ENCODE measurements at regions of chr17 and their contacts with region 1.

Region 1: GRCh38 chr17:78865682-78866390 is 25.2 kb upstream of the USP36 start:
- DNase-seq: peak; percentile 96
- ATAC-seq: peak; percentile 43
- H3K4me3 ChIP-seq: peak overlapping the region; percentile 51
- H3K27ac ChIP-seq: no peak overlapping the region
- H3K4me1 ChIP-seq: peaks cover 26% of the 10 kb centered on the region
- H3K27me3 ChIP-seq: no peaks in the 10 kb centered on the region
- CTCF ChIP-seq: peak; percentile 94

Region 2: GRCh38 chr17:78729641-78730040 is 136.2 kb before region 1 on chr17:
- CTCF ChIA-PET with region 1: interaction called, 10 read pairs
- POLR2A ChIA-PET with region 1: no interaction called
- intact Hi-C with region 1: no loop called
- DNase-seq: no peak
- ATAC-seq: no peak
- H3K4me3 ChIP-seq: no peak overlapping the region
- H3K27ac ChIP-seq: no peak overlapping the region
- H3K4me1 ChIP-seq: peaks cover under 1% of the 10 kb centered on the region
- H3K27me3 ChIP-seq: no peaks in the 10 kb centered on the region
- CTCF ChIP-seq: no peak

Region 3: GRCh38 chr17:78840725-78841611 is 24.9 kb before region 1 on chr17 and contains the start of gene USP36:
- CTCF ChIA-PET with region 1: no interaction called
- POLR2A ChIA-PET with region 1: no interaction called
- intact Hi-C with region 1: loop called (anchors 2 kb)
- DNase-seq: peak; percentile 100
- ATAC-seq: peak; percentile 82
- H3K4me3 ChIP-seq: peak within 1 kb of the TSS; percentile 77
- H3K27ac ChIP-seq: peak within 1 kb of the TSS; percentile 84
- H3K4me1 ChIP-seq: peaks cover 39% of the 10 kb centered on the region
- H3K27me3 ChIP-seq: no peaks in the 10 kb centered on the region
- CTCF ChIP-seq: no peak
- total RNA-seq, gene USP36: 37.5 and 41.8 TPM in 2 replicates

Region 4: GRCh38 chr17:78883164-78884122 is 17.6 kb after region 1 on chr17:
- CTCF ChIA-PET with region 1: interaction called, 4 read pairs
- POLR2A ChIA-PET with region 1: no interaction called
- intact Hi-C with region 1: loop called (anchors 1 kb)
- DNase-seq: peak; percentile 95
- ATAC-seq: peak; percentile 81
- H3K4me3 ChIP-seq: peak overlapping the region; percentile 47
- H3K27ac ChIP-seq: peak overlapping the region; percentile 84
- H3K4me1 ChIP-seq: peaks cover 42% of the 10 kb centered on the region
- H3K27me3 ChIP-seq: no peaks in the 10 kb centered on the region
- CTCF ChIP-seq: no peak

Region 5: DNA sequence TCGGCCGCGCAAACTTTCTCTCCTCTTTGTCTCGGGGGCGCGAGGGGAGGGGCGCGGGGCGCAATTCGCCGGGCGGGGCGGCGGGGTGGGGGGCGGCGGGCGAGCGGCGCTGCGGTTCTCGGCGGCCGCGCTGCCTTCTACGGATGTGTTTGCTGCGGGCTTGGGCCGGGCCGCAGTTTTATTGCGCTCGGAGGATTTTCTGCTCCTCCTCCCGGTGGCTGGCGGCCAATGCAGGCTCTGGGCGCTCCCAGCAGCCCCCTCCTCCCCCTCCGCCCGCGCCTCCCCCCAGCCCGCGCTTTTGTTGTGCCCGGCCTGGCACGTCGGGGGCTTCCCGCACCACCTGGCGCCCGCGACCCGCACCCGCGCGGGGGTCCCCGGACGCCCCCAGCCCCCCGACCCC is 59.4 kb after region 1 on chr17 and contains the start of gene TIMP2:
- CTCF ChIA-PET with region 1: interaction called, 11 read pairs
- POLR2A ChIA-PET with region 1: no interaction called
- intact Hi-C with region 1: loop called (anchors 2 kb)
- DNase-seq: peak; percentile 86
- ATAC-seq: peak; percentile 56
- H3K4me3 ChIP-seq: peak within 1 kb of the TSS; percentile 85
- H3K27ac ChIP-seq: no peak within 1 kb of the TSS
- H3K4me1 ChIP-seq: peaks cover 17% of the 10 kb centered on the region
- H3K27me3 ChIP-seq: no peaks in the 10 kb centered on the region
- CTCF ChIP-seq: no peak
- total RNA-seq, gene TIMP2: 60.1 and 62.5 TPM in 2 replicates

Region 6: DNA sequence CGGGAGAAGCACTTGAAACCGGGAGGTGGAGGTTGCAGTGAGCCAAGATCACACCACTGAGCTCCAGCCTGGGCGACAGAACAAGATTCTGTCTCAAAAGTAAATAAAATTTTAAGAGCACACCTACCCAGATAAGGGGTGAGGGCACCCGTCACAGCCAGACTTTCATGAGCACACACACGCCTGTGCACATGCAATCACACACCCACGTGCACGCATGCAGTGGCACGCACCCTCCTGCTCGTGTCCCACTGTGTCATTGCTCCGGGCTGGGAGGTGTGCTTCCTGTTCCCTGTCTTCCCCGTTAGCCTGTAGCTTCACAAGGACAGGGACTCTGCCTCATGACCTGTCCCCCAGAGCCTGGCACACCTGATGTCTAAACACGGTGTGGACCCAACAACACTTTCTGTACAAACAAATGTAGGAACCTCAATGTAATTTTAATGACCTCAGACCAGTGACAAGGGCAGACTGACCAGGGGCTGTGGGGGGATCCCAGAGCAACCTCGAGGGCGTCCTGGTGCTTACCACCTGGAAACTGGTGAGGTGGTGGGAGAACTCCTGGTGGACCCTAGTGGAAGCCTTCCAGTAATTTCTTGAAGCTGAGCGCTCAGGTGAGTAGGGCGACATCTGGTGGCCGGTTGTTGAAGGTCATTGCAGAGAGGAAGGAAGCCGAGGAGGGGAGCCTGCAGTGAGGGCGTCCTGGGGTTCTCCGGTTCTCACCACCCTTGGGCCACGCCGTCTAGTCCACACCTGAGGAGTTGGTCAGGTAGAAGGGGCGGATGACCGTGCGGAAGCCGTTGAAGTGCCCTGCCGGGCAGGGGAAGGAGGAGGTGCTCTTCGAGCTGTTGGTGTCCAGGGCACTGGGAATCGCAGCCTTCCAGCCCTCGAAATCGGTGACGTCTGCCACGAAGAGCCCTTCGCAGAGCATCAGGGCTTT is 105.3 kb after region 1 on chr17:
- CTCF ChIA-PET with region 1: interaction called, 23 read pairs
- POLR2A ChIA-PET with region 1: no interaction called
- intact Hi-C with region 1: loop called (anchors 1 kb)
- DNase-seq: peak; percentile 91
- ATAC-seq: peak; percentile 61
- H3K4me3 ChIP-seq: no peak overlapping the region
- H3K27ac ChIP-seq: no peak overlapping the region
- H3K4me1 ChIP-seq: peaks cover 8% of the 10 kb centered on the region
- H3K27me3 ChIP-seq: no peaks in the 10 kb centered on the region
- CTCF ChIP-seq: peak; percentile 97

Measured in PC-3 (cell line).